Sigmoid colon (tissue), 7 donors: ENCODE measurements at regions of chr7 and their contacts with region 1.

Region 1: GRCh38 chr7:43869006-43869866 is at the start of gene MRPS24:
- DNase-seq: peak; percentile 97
- H3K4me3 ChIP-seq: peak within 1 kb of the TSS; percentile 83 to 99 (median 90)
- H3K27ac ChIP-seq: peak within 1 kb of the TSS; percentile 87 to 94 (median 92)
- H3K4me1 ChIP-seq: peaks cover 0 to 33% (median 24%) of the 10 kb centered on the region in 4 donors
- H3K27me3 ChIP-seq: no peaks in the 10 kb centered on the region
- CTCF ChIP-seq: no peak
- EP300 ChIP-seq: no peak
- POLR2A ChIP-seq: peak; percentile 11 to 35
- total RNA-seq, gene MRPS24: 105 to 148 (median 125) TPM

Region 2: DNA sequence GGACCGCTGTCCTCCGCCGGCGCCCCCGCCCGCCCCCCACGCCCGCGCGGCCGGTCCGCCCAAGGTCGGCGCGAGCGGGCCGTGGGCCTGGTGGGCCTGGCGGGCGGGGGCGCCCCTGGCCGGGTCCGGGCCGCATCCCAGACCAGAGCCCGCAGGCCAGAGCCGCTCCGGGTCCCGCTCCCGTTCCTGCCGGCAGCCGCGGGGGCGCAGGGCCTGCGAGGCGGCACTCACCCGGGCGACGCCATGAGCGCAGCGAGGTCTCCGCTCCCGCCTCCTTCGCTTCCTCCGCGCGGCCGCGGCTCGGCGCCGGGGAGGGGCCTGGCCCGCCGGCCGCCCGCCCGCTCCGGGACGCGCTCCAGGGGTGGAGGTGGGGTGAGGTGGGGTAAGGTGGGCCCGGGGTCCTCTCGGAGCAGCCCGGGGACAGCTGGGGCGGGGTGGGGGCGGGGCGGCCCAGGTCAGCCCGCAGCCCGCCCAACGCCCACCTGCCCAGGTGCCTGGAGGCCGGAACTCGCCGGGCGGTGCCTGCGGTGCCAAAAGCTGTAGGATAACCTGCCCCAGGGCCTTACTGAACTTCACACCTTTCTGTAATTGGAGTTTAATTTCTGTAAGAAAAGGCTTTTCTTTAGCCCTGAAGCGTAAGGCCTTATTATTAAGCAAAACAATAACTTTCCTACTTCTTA is 37.2 kb after region 1 on chr7 and contains the start of gene URGCP:
- intact Hi-C with region 1: loop called (anchors 5 kb)
- DNase-seq: peak; percentile 74
- H3K4me3 ChIP-seq: peak within 1 kb of the TSS; percentile 55 to 83 (median 76)
- H3K27ac ChIP-seq: peak within 1 kb of the TSS; percentile 86 to 92 (median 88)
- H3K4me1 ChIP-seq: peaks cover 0 to 35% (median 24%) of the 10 kb centered on the region in 4 donors
- H3K27me3 ChIP-seq: no peaks in the 10 kb centered on the region
- CTCF ChIP-seq: no peak
- EP300 ChIP-seq: no peak
- POLR2A ChIP-seq: no peak
- total RNA-seq, gene URGCP: 18.4 to 32.7 (median 24.0) TPM

Region 3: DNA sequence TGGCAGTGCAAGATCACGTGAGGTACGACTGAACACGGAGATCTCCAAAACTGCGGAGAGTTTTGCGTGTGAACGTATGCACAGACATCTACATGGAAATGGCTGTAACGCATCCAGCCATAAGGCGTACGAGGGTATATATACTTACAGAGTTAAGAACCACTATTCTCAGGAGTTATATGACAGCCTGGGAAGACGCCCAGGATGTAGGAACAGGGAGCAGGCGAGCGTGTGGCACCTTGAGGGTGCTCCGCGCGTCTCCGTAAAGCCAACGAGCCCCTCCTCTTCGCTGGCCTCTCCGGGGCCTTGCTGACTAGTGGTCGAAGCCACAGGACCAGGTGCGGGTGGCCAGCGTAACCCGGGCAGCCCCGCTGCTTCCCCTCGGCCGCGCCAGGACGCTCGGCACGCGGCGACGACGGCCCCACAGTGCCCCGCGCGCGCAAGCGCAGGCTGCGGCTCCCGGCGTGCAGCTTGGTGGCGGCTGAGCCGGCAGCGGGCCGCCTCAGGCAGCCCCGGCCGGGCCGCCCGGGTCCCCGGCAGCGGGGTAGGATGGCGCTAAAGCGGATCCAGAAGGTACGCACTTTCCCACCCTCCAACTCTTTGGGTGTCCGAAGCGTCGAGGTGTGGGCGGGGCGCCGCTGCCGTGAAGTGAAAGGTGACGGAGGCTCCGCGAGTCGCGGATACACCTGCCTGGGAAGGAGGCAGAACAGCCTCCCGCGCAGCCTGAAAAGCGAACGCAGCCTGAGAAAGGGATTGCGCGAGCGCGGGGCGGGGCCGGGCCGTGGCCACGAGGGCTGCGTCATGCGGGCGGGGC is 57.0 kb after region 1 on chr7 and contains the start of gene UBE2D4:
- intact Hi-C with region 1: loop called (anchors 1 kb)
- DNase-seq: peak; percentile 93
- H3K4me3 ChIP-seq: peak within 1 kb of the TSS; percentile 49 to 66 (median 64)
- H3K27ac ChIP-seq: peak within 1 kb of the TSS; percentile 86 to 95 (median 92)
- H3K4me1 ChIP-seq: peaks cover 0 to 19% (median 12%) of the 10 kb centered on the region in 4 donors
- H3K27me3 ChIP-seq: no peaks in the 10 kb centered on the region
- CTCF ChIP-seq: no peak
- EP300 ChIP-seq: no peak
- POLR2A ChIP-seq: peak; percentile 95 to 96
- total RNA-seq, gene UBE2D4: 24.0 to 37.1 (median 28.5) TPM

Region 4: GRCh38 chr7:44103923-44104859 is 235.0 kb after region 1 on chr7 and contains the start of gene AEBP1:
- intact Hi-C with region 1: no loop called
- DNase-seq: peak; percentile 74
- H3K4me3 ChIP-seq: peak within 1 kb of the TSS; percentile 45 to 65 (median 52)
- H3K27ac ChIP-seq: peak within 1 kb of the TSS; percentile 74 to 91 (median 78)
- H3K4me1 ChIP-seq: peaks cover 0 to 29% (median 21%) of the 10 kb centered on the region in 4 donors
- H3K27me3 ChIP-seq: peaks cover 5 to 53% (median 14%) of the 10 kb centered on the region in 3 donors
- CTCF ChIP-seq: no peak
- EP300 ChIP-seq: no peak
- POLR2A ChIP-seq: no peak
- total RNA-seq, gene AEBP1: 74.6 to 182 (median 128) TPM